Activated CD4-positive, alpha-beta T cell treated with anti-CD3 and anti-CD28 coated beads for 36 hours (primary cell): ENCODE measurements at regions of chr4 and their contacts with region 1.

Region 1: GRCh38 chr4:9762823-9763475 is 18.5 kb upstream of the DRD5 start:
- DNase-seq: peak; percentile 57
- ATAC-seq: peak; percentile 47
- H3K4me3 Mint-ChIP-seq: no peak overlapping the region
- H3K27ac Mint-ChIP-seq: no peak overlapping the region
- H3K4me1 Mint-ChIP-seq: no peaks in the 10 kb centered on the region
- H3K27me3 Mint-ChIP-seq: peaks cover 11% of the 10 kb centered on the region

Region 2: GRCh38 chr4:9704551-9705332 is 58.2 kb before region 1 on chr4:
- CTCF ChIA-PET with region 1: no interaction called
- POLR2A ChIA-PET with region 1: no interaction called
- intact Hi-C with region 1: loop called in 1 of 2 experiments (anchors 5 kb)
- DNase-seq: peak; percentile 17
- ATAC-seq: no peak
- H3K4me3 Mint-ChIP-seq: no peak overlapping the region
- H3K27ac Mint-ChIP-seq: no peak overlapping the region
- H3K4me1 Mint-ChIP-seq: peaks cover 5% of the 10 kb centered on the region
- H3K27me3 Mint-ChIP-seq: no peaks in the 10 kb centered on the region

Region 3: GRCh38 chr4:9898596-9899305 is 135.8 kb after region 1 on chr4:
- CTCF ChIA-PET with region 1: no interaction called
- POLR2A ChIA-PET with region 1: no interaction called
- intact Hi-C with region 1: loop called in 1 of 2 experiments (anchors 2 kb)
- DNase-seq: peak; percentile 27
- ATAC-seq: peak; percentile 44
- H3K4me3 Mint-ChIP-seq: no peak overlapping the region
- H3K27ac Mint-ChIP-seq: no peak overlapping the region
- H3K4me1 Mint-ChIP-seq: no peaks in the 10 kb centered on the region
- H3K27me3 Mint-ChIP-seq: peaks cover 2% of the 10 kb centered on the region

Region 4: DNA sequence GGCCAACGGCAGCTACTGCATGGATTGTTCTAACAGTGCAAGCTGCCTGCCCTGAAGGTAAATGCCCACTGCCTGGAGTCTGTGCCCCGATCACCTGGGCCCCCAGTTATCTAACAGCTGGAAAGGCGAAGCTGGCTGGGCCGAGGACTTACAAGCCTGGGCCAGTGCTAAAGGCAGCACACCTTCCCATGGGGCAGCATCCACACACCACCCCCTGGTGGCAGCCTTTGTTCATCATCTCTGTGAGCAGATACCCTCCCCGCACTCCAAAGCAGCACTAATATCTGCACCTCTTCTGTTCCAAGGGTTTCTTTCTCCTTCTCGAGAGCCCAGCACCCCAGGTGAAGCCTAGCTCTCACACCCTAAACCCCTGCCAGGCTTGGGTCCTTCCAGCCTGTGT is 250.8 kb after region 1 on chr4:
- CTCF ChIA-PET with region 1: interaction called, 26 read pairs
- POLR2A ChIA-PET with region 1: no interaction called
- intact Hi-C with region 1: loop called (anchors 1 kb)
- DNase-seq: peak; percentile 78
- ATAC-seq: peak; percentile 53
- H3K4me3 Mint-ChIP-seq: no peak overlapping the region
- H3K27ac Mint-ChIP-seq: no peak overlapping the region
- H3K4me1 Mint-ChIP-seq: no peaks in the 10 kb centered on the region
- H3K27me3 Mint-ChIP-seq: no peaks in the 10 kb centered on the region

Region 5: DNA sequence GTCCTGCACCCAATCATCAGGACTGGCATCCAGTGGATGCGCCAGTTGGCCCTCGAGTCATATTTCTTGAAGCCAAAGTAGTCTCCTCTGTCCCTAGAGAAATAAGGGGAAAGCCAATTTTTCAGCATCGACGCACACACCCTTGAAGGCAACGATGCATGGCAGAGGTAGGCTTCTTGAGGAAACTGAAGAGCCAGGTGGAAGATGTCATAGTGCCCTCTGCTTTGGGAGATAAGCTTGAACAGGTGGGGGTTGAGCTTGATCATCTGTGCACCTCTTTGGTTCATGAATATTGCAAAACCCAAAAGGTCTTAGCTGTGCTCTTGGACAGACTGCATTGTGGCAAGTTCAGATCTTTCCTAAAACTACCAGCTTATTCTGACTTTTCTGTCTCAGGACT is 388.2 kb after region 1 on chr4:
- CTCF ChIA-PET with region 1: no interaction called
- POLR2A ChIA-PET with region 1: no interaction called
- intact Hi-C with region 1: no loop called
- DNase-seq: no peak
- ATAC-seq: no peak
- H3K4me3 Mint-ChIP-seq: no peak overlapping the region
- H3K27ac Mint-ChIP-seq: no peak overlapping the region
- H3K4me1 Mint-ChIP-seq: no peaks in the 10 kb centered on the region
- H3K27me3 Mint-ChIP-seq: no peaks in the 10 kb centered on the region

Region 6: DNA sequence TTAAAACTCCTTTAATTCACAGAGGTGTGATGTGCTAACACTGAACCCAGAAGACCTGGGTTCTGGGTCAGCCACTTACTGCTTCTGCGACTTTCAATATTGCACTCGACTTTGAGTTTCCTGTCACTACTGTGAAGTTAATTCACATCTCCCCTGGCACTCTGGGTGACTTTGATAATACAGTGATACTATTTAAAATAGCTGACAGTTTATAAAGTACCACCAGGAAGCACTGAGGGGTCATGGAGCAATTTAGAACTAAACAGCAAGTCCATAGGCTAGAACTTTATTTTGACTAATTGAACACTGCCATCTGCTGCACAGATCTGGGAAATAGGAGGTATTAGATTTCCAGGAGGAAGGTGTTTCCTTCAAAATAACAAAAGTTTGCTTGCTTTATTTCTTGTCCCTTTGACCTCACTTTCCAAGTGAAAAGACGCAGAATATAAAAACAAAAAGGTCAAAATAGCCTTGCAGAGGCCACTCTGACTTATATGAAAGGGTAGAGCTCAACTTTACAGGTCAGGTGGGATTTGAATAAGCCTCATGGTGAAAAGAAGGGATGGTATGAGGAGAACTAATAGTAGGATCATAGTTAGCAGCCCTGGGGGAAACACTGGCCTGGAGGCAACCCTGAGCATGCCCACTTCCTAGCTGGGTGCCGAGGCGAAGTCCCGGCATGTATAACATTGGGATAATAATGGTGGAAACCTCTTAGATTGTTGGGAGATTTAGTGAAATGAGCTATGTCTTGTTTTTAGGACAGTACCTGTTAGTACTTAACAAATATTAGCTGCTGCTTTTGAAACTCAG is 640.9 kb after region 1 on chr4:
- CTCF ChIA-PET with region 1: no interaction called
- POLR2A ChIA-PET with region 1: no interaction called
- intact Hi-C with region 1: loop called (anchors 5 to 10 kb)
- DNase-seq: peak; percentile 7
- ATAC-seq: no peak
- H3K4me3 Mint-ChIP-seq: no peak overlapping the region
- H3K27ac Mint-ChIP-seq: no peak overlapping the region
- H3K4me1 Mint-ChIP-seq: no peaks in the 10 kb centered on the region
- H3K27me3 Mint-ChIP-seq: no peaks in the 10 kb centered on the region

Region 7: GRCh38 chr4:10554694-10555093 is 791.7 kb after region 1 on chr4:
- CTCF ChIA-PET with region 1: no interaction called
- POLR2A ChIA-PET with region 1: no interaction called
- intact Hi-C with region 1: loop called in 1 of 2 experiments (anchors 5 kb)
- DNase-seq: peak; percentile 64
- ATAC-seq: peak; percentile 61
- H3K4me3 Mint-ChIP-seq: no peak overlapping the region
- H3K27ac Mint-ChIP-seq: no peak overlapping the region
- H3K4me1 Mint-ChIP-seq: peaks cover 3% of the 10 kb centered on the region
- H3K27me3 Mint-ChIP-seq: peaks cover 11% of the 10 kb centered on the region